GM12878 (cell line): ENCODE measurements at regions of chr3 and their contacts with region 1.

Region 1: DNA sequence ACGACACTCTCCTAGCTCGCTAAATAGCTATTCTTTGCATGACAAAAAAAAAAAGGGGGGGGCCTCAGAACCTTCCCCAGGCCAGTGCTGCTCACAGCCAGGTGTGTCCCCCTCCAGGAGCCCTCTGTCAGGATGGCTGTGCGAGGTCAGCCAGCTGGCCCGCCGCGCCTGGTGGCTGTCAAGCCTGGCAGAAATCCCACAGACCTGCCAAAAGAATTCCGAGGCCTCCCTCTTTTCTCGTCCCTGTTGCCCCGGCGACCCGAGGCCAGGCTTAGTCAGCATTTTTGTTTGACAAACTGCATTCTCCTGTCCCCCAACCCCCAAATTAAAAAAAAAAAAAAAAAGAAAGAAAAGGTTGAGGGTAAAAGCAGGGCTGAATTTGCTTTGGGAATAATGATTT is 61.9 kb downstream of the TM4SF4 start:
- DNase-seq: no peak
- ATAC-seq: no peak
- H3K4me3 ChIP-seq: no peak overlapping the region
- H3K27ac ChIP-seq: no peak overlapping the region
- H3K4me1 ChIP-seq: peaks cover 12% of the 10 kb centered on the region
- H3K27me3 ChIP-seq: no peaks in the 10 kb centered on the region
- CTCF ChIP-seq: no peak
- EP300 ChIP-seq: no peak
- POLR2A ChIP-seq: no peak
- RAD21 ChIP-seq: no peak

Region 2: GRCh38 chr3:149401215-149401925 is 135.1 kb before region 1 on chr3:
- CTCF ChIA-PET with region 1: no interaction called
- POLR2A ChIA-PET with region 1: no interaction called
- RAD21 ChIA-PET with region 1: no interaction called
- SMC1A ChIA-PET with region 1: no interaction called
- in situ Hi-C with region 1: no loop called
- intact Hi-C with region 1: no loop called
- DNase-seq: no peak
- ATAC-seq: no peak
- H3K4me3 ChIP-seq: no peak overlapping the region
- H3K27ac ChIP-seq: no peak overlapping the region
- H3K4me1 ChIP-seq: no peaks in the 10 kb centered on the region
- H3K27me3 ChIP-seq: no peaks in the 10 kb centered on the region
- CTCF ChIP-seq: no peak
- EP300 ChIP-seq: no peak
- POLR2A ChIP-seq: no peak
- RAD21 ChIP-seq: no peak

Region 3: DNA sequence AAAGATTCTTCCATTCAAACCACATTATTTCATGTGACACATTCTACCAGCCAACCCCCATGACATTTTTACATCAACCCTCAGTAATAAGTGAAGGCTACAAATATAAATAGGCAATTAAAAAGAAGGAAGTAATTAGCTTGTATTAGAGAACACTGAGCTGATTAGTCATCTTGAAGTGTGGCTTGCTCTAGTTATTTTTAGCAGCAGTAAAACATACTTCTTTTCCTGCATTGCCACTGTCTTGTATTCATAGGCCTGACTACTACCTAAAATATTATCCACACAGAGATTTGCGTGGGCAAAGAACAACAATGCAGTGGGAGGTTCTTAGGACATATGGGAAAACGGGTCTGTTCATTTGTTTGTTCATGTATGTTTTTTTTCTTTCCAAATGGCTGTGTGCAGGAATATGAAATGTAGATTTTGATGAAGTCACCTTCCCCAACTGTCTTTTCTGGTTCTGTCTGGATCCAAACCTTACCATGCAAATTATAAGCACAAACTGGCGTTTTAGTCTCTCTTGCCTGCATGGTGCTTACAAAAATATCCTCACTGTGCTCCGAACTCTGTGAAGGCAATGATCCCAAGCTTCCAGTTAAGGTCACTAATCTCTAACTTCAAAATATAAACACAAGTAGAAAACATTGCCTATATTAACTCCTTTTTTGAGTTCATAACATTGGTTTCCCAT is 93.4 kb before region 1 on chr3:
- CTCF ChIA-PET with region 1: no interaction called
- POLR2A ChIA-PET with region 1: no interaction called
- RAD21 ChIA-PET with region 1: no interaction called
- SMC1A ChIA-PET with region 1: no interaction called
- in situ Hi-C with region 1: no loop called
- intact Hi-C with region 1: no loop called
- DNase-seq: peak; percentile 35
- ATAC-seq: peak; percentile 84
- H3K4me3 ChIP-seq: no peak overlapping the region
- H3K27ac ChIP-seq: no peak overlapping the region
- H3K4me1 ChIP-seq: no peaks in the 10 kb centered on the region
- H3K27me3 ChIP-seq: no peaks in the 10 kb centered on the region; a peak in 1 of 4 replicates
- CTCF ChIP-seq: no peak
- EP300 ChIP-seq: no peak; a peak in 1 of 4 replicates
- POLR2A ChIP-seq: no peak
- RAD21 ChIP-seq: no peak

Region 4: GRCh38 chr3:149519912-149520311 is 16.5 kb before region 1 on chr3:
- CTCF ChIA-PET with region 1: interaction called, 51 read pairs
- POLR2A ChIA-PET with region 1: no interaction called
- RAD21 ChIA-PET with region 1: interaction called, 4 read pairs
- SMC1A ChIA-PET with region 1: interaction called, 10 read pairs
- in situ Hi-C with region 1: no loop called
- intact Hi-C with region 1: no loop called
- DNase-seq: no peak
- ATAC-seq: no peak
- H3K4me3 ChIP-seq: no peak overlapping the region
- H3K27ac ChIP-seq: no peak overlapping the region
- H3K4me1 ChIP-seq: no peaks in the 10 kb centered on the region
- H3K27me3 ChIP-seq: no peaks in the 10 kb centered on the region
- CTCF ChIP-seq: no peak
- EP300 ChIP-seq: no peak
- POLR2A ChIP-seq: no peak
- RAD21 ChIP-seq: no peak

Region 5: DNA sequence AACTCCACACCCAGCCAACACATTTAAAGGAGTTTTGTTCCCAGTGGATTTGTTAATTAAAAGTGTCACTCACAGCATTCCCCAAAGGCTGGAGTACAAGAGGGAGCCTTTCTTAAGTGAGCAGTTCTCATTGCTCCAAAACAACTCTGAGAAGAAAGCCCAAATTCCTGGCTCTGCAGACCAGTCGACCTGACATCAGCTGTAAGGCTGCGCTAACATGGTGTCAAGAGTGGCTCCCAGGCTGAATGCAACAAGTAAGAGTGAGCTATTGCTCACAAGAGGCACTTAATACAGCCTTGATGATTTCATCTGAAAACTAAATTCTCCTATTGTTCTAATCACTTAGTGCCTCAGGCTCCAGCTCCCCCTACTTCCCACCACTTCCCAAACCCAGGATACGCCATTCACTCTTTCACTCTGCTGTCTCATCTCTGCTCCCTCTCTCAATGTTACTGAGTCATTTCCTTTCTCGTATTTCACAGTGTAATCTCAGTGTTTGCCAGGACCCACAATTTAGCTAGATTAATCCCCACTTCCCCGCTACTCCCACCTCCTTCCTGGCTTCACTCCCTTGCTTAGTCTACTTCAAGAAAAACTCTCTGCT is 39.6 kb after region 1 on chr3:
- CTCF ChIA-PET with region 1: interaction called, 108 read pairs
- POLR2A ChIA-PET with region 1: interaction called, 3 read pairs
- RAD21 ChIA-PET with region 1: interaction called, 26 read pairs
- SMC1A ChIA-PET with region 1: interaction called, 90 read pairs
- in situ Hi-C with region 1: no loop called
- intact Hi-C with region 1: no loop called
- DNase-seq: no peak
- ATAC-seq: peak; percentile 51
- H3K4me3 ChIP-seq: peak overlapping the region; percentile 10; the same call in 1 of the 2 replicates
- H3K27ac ChIP-seq: peak overlapping the region; percentile 70
- H3K4me1 ChIP-seq: peaks cover 59% of the 10 kb centered on the region
- H3K27me3 ChIP-seq: no peaks in the 10 kb centered on the region
- CTCF ChIP-seq: no peak
- EP300 ChIP-seq: 0 out of 4 replicates have a peak, but pooled peaks of 1 of the 2 experiments have one; percentile 35
- POLR2A ChIP-seq: no peak
- RAD21 ChIP-seq: no peak

Region 6: GRCh38 chr3:149603126-149604074 is 67.0 kb after region 1 on chr3:
- CTCF ChIA-PET with region 1: interaction called, 8 read pairs
- POLR2A ChIA-PET with region 1: interaction called, 4 read pairs
- RAD21 ChIA-PET with region 1: interaction called, 34 read pairs
- SMC1A ChIA-PET with region 1: interaction called, 22 read pairs
- in situ Hi-C with region 1: no loop called
- intact Hi-C with region 1: no loop called
- DNase-seq: no peak
- ATAC-seq: no peak
- H3K4me3 ChIP-seq: no peak overlapping the region
- H3K27ac ChIP-seq: peak overlapping the region; percentile 12; the same call in 1 of the 2 replicates
- H3K4me1 ChIP-seq: peaks cover 28% of the 10 kb centered on the region
- H3K27me3 ChIP-seq: no peaks in the 10 kb centered on the region
- CTCF ChIP-seq: no peak
- EP300 ChIP-seq: peak; percentile 35 to 58; a peak in 1 of 4 replicates
- POLR2A ChIP-seq: no peak
- RAD21 ChIP-seq: no peak

Region 7: GRCh38 chr3:149752051-149752787 is 215.8 kb after region 1 on chr3 and contains the start of gene COMMD2:
- CTCF ChIA-PET with region 1: interaction called, 49 read pairs
- POLR2A ChIA-PET with region 1: interaction called, 4 read pairs
- RAD21 ChIA-PET with region 1: interaction called, 21 read pairs
- SMC1A ChIA-PET with region 1: interaction called, 26 read pairs
- in situ Hi-C with region 1: no loop called
- intact Hi-C with region 1: loop called (anchors 1 kb)
- DNase-seq: peak; percentile 84
- ATAC-seq: peak; percentile 100
- H3K4me3 ChIP-seq: peak within 1 kb of the TSS; percentile 85
- H3K27ac ChIP-seq: peak within 1 kb of the TSS; percentile 54
- H3K4me1 ChIP-seq: no peaks in the 10 kb centered on the region
- H3K27me3 ChIP-seq: no peaks in the 10 kb centered on the region
- CTCF ChIP-seq: peak; percentile 21 to 47 (median 46); a peak in 5 of 6 replicates
- EP300 ChIP-seq: no peak
- POLR2A ChIP-seq: peak; percentile 95
- RAD21 ChIP-seq: peak; percentile 40
- polyA plus RNA-seq, gene COMMD2: 59.4 to 97.0 TPM